Panc1 (cell line): ENCODE measurements at regions of chr6 and their contacts with region 1.

Region 1: DNA sequence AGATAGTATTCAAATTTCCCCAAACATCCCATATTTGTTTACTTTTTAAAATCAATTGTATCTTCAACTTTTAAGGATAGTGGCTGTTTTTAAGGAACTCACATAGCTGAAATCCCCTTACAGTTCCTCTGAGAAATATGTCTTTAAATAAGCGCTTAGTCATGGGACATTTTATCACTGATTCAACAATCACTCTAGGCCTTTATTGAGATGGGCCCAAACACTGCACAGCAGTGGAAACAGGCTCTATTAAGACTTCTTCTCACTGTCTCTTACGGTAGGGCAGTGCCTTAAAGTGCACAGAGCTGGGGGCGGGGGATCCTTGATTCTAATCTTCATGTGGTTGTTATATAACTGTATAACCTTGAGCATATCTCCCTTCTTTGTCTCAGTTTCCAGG is 59.8 kb upstream of the RREB1 start:
- DNase-seq: no peak
- ATAC-seq: no peak
- H3K4me3 ChIP-seq: no peak overlapping the region
- H3K27ac ChIP-seq: 0 out of 2 replicates have a peak overlapping the region, but pooled peaks have one; percentile 15
- H3K4me1 ChIP-seq: peaks cover 2% of the 10 kb centered on the region; the same call in 1 of the 2 replicates
- H3K27me3 ChIP-seq: peaks cover 2% of the 10 kb centered on the region; the same call in 1 of the 2 replicates
- CTCF ChIP-seq: no peak

Region 2: DNA sequence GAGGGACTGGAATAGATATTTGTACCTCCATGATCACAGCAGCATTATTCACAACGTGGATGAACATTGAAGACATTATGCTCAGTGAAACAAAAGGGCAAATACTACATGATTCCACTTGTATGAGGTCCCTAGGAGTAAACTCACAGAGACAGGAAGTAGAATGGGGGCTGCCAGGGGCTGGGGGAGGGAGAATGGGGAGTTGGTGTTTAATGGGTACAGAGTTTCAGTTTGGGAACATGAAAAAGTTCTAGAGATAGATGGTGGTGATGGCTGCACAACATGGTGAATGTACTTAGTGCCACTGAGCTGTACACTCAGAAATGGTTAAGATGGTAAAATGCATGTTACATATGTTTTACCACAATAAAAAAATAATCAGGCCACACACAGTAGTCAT is 104.5 kb before region 1 on chr6:
- CTCF ChIA-PET with region 1: interaction called, 12 read pairs
- POLR2A ChIA-PET with region 1: no interaction called
- in situ Hi-C with region 1: no loop called
- intact Hi-C with region 1: no loop called
- DNase-seq: no peak
- ATAC-seq: no peak
- H3K4me3 ChIP-seq: no peak overlapping the region
- H3K27ac ChIP-seq: no peak overlapping the region
- H3K4me1 ChIP-seq: no peaks in the 10 kb centered on the region
- H3K27me3 ChIP-seq: no peaks in the 10 kb centered on the region
- CTCF ChIP-seq: no peak

Region 3: DNA sequence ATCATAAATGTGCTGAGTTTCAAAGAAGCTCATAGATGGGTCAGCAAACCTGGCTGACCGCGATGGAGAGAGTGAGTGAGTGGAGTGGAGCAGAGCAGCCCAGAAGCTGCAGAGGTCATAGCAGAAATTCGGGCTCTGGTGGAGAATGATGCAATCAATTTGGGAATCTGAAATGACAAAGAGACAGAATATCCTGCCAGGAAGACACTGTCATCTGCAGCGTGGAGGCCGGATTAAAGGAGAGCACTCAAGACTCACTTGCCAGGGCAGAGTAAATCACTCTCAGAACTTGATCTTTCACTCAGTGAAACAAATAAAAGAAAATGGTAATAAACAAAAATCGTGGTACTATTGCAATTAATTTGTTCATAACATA is 49.8 kb before region 1 on chr6:
- CTCF ChIA-PET with region 1: no interaction called
- POLR2A ChIA-PET with region 1: no interaction called
- in situ Hi-C with region 1: no loop called
- intact Hi-C with region 1: no loop called
- DNase-seq: no peak
- ATAC-seq: no peak
- H3K4me3 ChIP-seq: no peak overlapping the region
- H3K27ac ChIP-seq: no peak overlapping the region
- H3K4me1 ChIP-seq: no peaks in the 10 kb centered on the region
- H3K27me3 ChIP-seq: no peaks in the 10 kb centered on the region
- CTCF ChIP-seq: no peak

Region 4: DNA sequence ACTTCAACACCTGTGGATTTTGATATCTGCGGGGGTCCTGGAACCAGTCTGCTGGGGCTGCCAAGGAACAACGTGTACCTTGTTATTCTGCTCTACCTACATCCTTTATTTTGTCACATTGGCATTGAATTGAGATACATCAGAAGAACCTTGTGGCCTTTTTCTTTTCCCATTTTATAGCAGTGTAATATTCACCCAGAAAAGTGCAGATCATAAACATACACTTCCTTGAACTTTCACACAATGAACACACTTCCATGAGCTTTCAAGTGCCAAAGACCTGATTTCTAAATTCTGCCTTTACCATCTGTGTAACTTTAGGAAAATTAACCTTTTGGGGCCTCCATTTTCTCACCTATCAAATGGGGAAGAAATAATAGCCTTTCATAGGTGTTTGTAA is 29.9 kb after region 1 on chr6:
- CTCF ChIA-PET with region 1: no interaction called
- POLR2A ChIA-PET with region 1: interaction called, 10 read pairs
- in situ Hi-C with region 1: no loop called
- intact Hi-C with region 1: no loop called
- DNase-seq: no peak
- ATAC-seq: no peak
- H3K4me3 ChIP-seq: no peak overlapping the region
- H3K27ac ChIP-seq: no peak overlapping the region
- H3K4me1 ChIP-seq: no peaks in the 10 kb centered on the region
- H3K27me3 ChIP-seq: no peaks in the 10 kb centered on the region
- CTCF ChIP-seq: no peak